Esophagus squamous epithelium (tissue), 5 donors: ENCODE measurements at regions of chr11 and their contacts with region 1.

Region 1: DNA sequence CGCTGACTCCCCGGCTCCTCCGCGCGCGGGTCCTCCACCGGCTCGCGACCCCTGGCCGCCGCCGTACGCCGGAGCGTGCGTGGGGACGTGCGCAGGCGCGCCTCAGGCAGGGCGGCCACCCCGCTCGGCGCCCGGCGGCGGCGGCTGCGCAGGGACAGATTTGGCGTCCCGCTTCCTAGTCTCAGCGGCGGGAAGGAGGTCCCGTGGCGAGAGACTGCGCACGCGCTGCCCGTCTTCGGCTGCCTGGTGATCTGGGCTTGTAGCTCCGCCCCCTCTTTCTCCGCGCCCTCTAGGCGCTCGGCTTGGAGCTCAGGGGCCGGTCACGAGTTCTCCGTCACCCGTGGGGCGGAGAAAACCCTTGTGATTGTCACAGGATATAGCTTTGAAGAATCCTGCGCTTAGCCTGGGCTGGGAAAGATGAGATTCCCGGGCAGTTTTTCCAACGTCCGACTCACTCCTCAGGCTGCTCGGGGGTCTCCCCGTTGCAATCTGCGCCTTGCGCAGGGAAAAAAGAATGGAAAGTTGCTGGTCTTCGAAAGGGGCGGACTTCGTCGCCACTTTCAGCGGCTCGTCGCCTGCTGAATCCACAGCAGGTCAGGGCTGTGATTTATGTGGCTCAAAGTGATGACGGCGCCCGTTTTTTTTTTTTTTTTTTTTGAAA is at the start of gene PATL1:
- DNase-seq: peak; percentile 90
- H3K4me3 ChIP-seq: peak within 1 kb of the TSS; percentile 91 to 98 (median 94)
- H3K27ac ChIP-seq: peak within 1 kb of the TSS; percentile 97 to 99 (median 98)
- H3K4me1 ChIP-seq: peaks cover 13 to 35% (median 22%) of the 10 kb centered on the region in 3 donors
- H3K27me3 ChIP-seq: no peaks in the 10 kb centered on the region
- CTCF ChIP-seq: no peak
- POLR2A ChIP-seq: peak in 3 of 4 donors; percentile 62 to 90 (median 79)
- total RNA-seq, gene PATL1: 11.2 to 17.9 (median 15.3) TPM

Region 2: GRCh38 chr11:59534676-59535075 is 134.4 kb before region 1 on chr11:
- intact Hi-C with region 1: loop called (anchors 10 kb)
- DNase-seq: no peak
- H3K4me3 ChIP-seq: no peak overlapping the region
- H3K27ac ChIP-seq: no peak overlapping the region
- H3K4me1 ChIP-seq: peaks cover 0 to 16% (median 4%) of the 10 kb centered on the region in 3 donors
- H3K27me3 ChIP-seq: no peaks in the 10 kb centered on the region
- CTCF ChIP-seq: no peak
- POLR2A ChIP-seq: no peak

Region 3: DNA sequence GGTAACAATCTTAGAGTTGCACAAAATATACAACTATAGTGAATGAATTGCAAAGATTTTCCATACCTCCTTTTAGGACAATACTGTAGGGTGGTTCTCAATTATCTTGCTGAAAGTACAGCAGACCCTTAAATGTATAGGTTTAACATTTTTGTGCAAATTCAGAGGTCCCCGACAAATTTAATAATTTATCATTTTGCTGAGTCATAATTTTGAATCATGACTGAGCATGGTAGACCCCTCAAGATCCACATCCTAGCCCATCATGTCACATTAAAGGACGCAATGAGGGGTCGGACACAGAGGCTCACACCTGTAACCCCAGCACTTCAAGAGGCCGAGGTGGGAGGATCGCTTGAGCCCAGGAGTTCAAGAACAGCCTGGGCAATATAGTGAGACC is 97.0 kb before region 1 on chr11:
- intact Hi-C with region 1: no loop called
- DNase-seq: no peak
- H3K4me3 ChIP-seq: no peak overlapping the region
- H3K27ac ChIP-seq: no peak overlapping the region
- H3K4me1 ChIP-seq: peaks cover 0 to 16% (median 7%) of the 10 kb centered on the region in 3 donors
- H3K27me3 ChIP-seq: no peaks in the 10 kb centered on the region
- CTCF ChIP-seq: no peak
- POLR2A ChIP-seq: no peak

Region 4: GRCh38 chr11:59611570-59612565 is 57.2 kb before region 1 on chr11:
- intact Hi-C with region 1: loop called (anchors 5 kb)
- DNase-seq: no peak
- H3K4me3 ChIP-seq: no peak overlapping the region
- H3K27ac ChIP-seq: peak overlapping the region; percentile 12 to 65 (median 34)
- H3K4me1 ChIP-seq: peaks cover 25 to 52% (median 36%) of the 10 kb centered on the region in 3 donors
- H3K27me3 ChIP-seq: no peaks in the 10 kb centered on the region
- CTCF ChIP-seq: no peak
- POLR2A ChIP-seq: no peak

Region 5: DNA sequence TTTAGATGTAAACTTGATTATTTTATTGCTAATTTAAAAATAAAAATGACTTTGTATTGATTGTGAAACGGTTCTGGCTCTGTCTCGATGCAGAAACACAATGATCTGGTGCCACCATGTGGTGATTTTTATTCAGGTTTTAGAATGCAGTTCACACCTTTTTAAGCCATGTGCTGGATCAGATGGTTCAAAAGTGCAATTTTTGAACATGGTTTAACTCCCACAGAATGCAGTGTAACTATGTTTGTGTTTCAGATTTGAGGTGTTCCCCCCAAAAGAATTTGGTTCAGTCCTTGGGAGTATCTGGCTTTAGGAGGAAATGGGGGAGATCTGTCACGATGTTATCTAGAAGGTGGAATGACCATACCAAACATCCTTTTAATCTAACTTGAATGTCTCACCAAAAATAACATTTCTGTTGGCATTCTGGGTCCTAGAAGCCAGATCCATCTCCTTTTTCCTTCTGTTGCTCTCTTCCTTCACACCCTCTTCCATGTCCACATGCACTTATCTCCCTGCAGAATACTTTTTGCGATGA is 133.6 kb after region 1 on chr11:
- intact Hi-C with region 1: loop called (anchors 10 kb)
- DNase-seq: no peak
- H3K4me3 ChIP-seq: no peak overlapping the region
- H3K27ac ChIP-seq: no peak overlapping the region
- H3K4me1 ChIP-seq: peaks cover 0 to 24% (median 3%) of the 10 kb centered on the region in 3 donors
- H3K27me3 ChIP-seq: no peaks in the 10 kb centered on the region
- CTCF ChIP-seq: peak; percentile 36 to 75 (median 60)
- POLR2A ChIP-seq: no peak